Endothelial cell of umbilical vein (primary cell): ENCODE measurements at regions of chr12 and their contacts with region 1.

Region 1: GRCh38 chr12:6944381-6945186 is 762 bp downstream of the C12orf57 start:
- DNase-seq: peak; percentile 89
- H3K4me3 ChIP-seq: peak overlapping the region; percentile 20 to 51 (median 51)
- H3K27ac ChIP-seq: peak overlapping the region; percentile 57
- H3K4me1 ChIP-seq: peaks cover 15% of the 10 kb centered on the region
- H3K27me3 ChIP-seq: no peaks in the 10 kb centered on the region
- CTCF ChIP-seq: peak; percentile 72 to 89
- POLR2A ChIP-seq: no peak

Region 2: GRCh38 chr12:6873094-6874014 is 71.2 kb before region 1 on chr12 and contains the start of gene SPSB2:
- CTCF ChIA-PET with region 1: interaction called, 27 read pairs
- POLR2A ChIA-PET with region 1: interaction called, 10 read pairs
- dilution Hi-C with region 1: no loop called
- intact Hi-C with region 1: loop called (anchors 1 kb)
- DNase-seq: peak; percentile 96
- H3K4me3 ChIP-seq: peak within 1 kb of the TSS; percentile 59 to 92 (median 84)
- H3K27ac ChIP-seq: peak within 1 kb of the TSS; percentile 60
- H3K4me1 ChIP-seq: peaks cover 34% of the 10 kb centered on the region
- H3K27me3 ChIP-seq: no peaks in the 10 kb centered on the region
- CTCF ChIP-seq: no peak
- POLR2A ChIP-seq: peak; percentile 91
- total RNA-seq, gene SPSB2: 3.9 and 6.9 TPM in 2 replicates

Region 3: GRCh38 chr12:6959058-6959804 is 14.6 kb after region 1 on chr12:
- CTCF ChIA-PET with region 1: interaction called, 124 read pairs
- POLR2A ChIA-PET with region 1: interaction called, 6 read pairs
- dilution Hi-C with region 1: no loop called
- intact Hi-C with region 1: no loop called
- DNase-seq: no peak
- H3K4me3 ChIP-seq: no peak overlapping the region
- H3K27ac ChIP-seq: no peak overlapping the region
- H3K4me1 ChIP-seq: peaks cover 18% of the 10 kb centered on the region
- H3K27me3 ChIP-seq: no peaks in the 10 kb centered on the region
- CTCF ChIP-seq: no peak
- POLR2A ChIP-seq: no peak

Region 4: DNA sequence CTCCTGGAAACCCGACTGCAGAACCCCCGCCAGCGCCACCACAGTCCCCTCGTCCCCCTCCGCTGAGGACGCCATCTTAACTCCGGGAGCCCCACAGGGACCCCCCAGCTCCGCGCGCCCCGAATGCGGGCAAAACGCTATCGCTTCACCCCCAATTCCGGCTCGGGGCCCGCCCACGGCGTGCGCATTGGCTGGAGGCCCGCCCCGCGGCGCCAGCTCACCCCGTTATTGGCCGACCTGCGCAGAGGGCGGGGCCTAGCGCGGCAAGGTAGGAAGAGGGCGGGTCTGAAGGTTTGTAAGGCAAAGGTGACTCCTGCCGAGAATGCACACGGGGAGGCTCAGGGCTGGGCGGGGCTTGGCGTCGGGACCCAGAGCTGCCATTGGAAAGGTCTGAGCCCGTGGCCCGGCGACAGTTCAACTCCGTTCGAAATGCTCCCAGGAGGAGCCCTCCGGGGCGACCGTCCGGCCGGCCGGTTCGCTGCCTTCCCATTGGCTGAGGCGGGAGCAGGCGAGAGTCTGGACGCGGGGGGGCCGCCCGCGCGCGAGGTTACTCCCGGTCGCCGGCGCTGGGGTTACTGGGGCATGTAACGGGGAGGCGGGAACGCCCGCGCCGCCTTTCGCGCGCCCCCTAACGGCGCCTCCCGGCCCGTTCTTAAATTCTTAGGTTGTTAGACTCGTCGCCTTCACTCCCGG is 73.9 kb after region 1 on chr12 and contains the start of gene LPCAT3:
- CTCF ChIA-PET with region 1: interaction called, 5 read pairs
- POLR2A ChIA-PET with region 1: interaction called, 6 read pairs
- dilution Hi-C with region 1: no loop called
- intact Hi-C with region 1: loop called (anchors 2 kb)
- DNase-seq: peak; percentile 97
- H3K4me3 ChIP-seq: peak within 1 kb of the TSS; percentile 79 to 98 (median 97)
- H3K27ac ChIP-seq: peak within 1 kb of the TSS; percentile 64
- H3K4me1 ChIP-seq: peaks cover 10% of the 10 kb centered on the region
- H3K27me3 ChIP-seq: no peaks in the 10 kb centered on the region
- CTCF ChIP-seq: peak; percentile 88 to 94
- POLR2A ChIP-seq: peak; percentile 49
- total RNA-seq, gene LPCAT3: 29.3 and 29.5 TPM in 2 replicates

Region 5: DNA sequence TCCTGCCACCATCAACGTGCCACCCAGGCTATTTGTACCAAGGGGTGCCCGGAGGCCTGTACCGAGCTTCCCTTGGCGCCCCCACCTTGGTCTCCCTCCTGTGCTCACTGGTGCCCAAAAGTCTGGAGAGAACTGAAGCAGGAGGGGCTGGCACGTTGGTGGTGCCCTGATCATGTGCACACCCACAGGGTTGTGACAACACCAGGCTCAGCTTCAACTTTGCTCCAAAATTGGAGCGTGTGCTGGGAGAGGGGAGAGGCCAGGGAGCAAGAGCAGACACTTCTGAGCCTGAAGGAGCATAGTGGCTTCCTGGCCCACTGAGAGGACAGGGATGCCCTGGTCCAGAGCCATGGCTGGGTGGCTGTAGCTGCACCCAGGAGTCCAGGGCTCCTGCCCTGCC is 86.7 kb after region 1 on chr12:
- CTCF ChIA-PET with region 1: no interaction called
- POLR2A ChIA-PET with region 1: no interaction called
- dilution Hi-C with region 1: no loop called
- intact Hi-C with region 1: no loop called
- DNase-seq: no peak
- H3K4me3 ChIP-seq: no peak overlapping the region
- H3K27ac ChIP-seq: no peak overlapping the region
- H3K4me1 ChIP-seq: no peaks in the 10 kb centered on the region
- H3K27me3 ChIP-seq: peaks cover 5 to 8% of the 10 kb centered on the region in 2 experiments
- CTCF ChIP-seq: no peak
- POLR2A ChIP-seq: no peak

Region 6: DNA sequence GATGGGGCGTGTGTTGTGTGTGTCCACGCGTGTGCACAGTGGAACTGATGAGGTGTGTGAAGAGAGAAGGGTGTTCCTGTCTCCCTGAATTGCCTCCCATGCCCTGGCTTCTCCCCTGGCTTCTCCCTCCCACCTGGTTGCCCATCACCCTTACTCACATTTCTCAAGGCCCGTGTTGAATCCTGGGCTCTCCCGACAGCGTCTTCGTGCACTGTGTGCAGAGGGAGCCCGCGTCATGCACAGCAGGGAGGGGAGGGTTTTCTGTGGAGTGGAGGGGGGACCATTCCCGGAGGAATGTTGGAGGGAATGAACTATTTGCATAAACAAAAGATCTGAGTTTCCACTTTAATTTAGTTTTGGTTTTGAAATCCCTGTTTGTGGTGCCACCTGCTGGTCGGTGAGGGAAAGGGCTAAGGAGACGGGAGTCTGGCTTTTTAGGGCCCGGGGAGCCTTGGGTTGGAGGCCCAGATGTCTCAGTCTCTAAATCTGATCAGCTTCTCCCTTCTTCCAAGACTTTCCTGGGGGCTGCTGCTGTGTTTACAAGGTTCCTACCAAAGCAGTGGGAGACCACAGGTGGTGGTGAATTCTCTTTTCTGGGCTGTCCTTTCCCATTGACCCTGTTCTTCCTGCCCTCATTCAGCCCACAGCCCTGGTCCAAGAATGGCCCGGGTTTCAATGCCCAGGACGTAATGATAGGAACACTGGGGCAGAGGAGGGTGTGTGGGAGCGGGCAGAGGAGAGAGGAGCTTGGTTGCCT is 147.8 kb after region 1 on chr12 and contains the start of gene C1R:
- CTCF ChIA-PET with region 1: interaction called, 19 read pairs
- POLR2A ChIA-PET with region 1: no interaction called
- dilution Hi-C with region 1: no loop called
- intact Hi-C with region 1: loop called (anchors 1 kb)
- DNase-seq: peak; percentile 67
- H3K4me3 ChIP-seq: peak within 1 kb of the TSS; percentile 51 to 70 (median 64)
- H3K27ac ChIP-seq: no peak within 1 kb of the TSS
- H3K4me1 ChIP-seq: peaks cover 6% of the 10 kb centered on the region
- H3K27me3 ChIP-seq: peaks cover 0 to 16% of the 10 kb centered on the region in 2 experiments
- CTCF ChIP-seq: peak; percentile 85
- POLR2A ChIP-seq: no peak
- total RNA-seq, gene C1R: 3.1 and 3.6 TPM in 2 replicates

Region 7: DNA sequence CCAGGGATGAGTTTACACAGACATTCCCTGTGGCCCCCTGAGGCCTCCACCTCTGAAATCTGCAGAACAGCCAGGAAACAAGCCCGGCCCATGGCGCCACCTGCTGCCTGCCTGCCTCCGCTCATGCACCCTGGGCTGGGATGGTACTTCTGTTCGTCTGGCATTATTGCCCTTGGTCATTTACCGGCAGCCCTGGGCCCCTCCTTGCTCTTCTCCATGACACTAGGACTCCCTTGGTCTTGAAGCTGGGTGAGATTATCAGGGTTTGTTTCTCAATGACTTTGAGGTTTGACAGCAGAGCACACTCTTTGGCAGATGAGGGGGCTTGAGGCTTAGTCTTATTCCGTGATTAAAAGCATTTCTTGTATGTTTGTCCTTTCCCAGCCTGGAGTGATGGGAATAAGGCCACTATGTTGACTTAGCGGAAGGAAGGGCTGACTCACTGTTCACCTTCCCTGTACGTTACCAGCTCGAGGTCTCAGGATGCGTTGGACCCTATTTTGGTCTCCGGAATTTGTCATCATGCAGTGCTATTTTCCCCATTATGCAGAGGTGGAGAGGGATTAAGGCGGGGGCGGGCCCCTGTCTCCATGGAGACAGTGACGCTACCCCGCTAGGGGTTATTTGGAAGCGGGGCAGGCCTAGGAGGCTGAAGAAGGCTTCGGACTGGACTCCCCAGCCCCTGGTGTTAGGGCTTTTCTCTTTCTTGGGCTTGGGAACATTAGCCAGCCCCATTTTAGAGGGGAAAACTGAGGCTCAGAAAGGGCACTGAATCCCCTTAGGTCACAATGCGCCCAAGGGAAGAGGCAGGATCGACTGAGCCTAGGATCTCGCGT is 244.2 kb after region 1 on chr12:
- CTCF ChIA-PET with region 1: interaction called, 3 read pairs
- POLR2A ChIA-PET with region 1: no interaction called
- dilution Hi-C with region 1: no loop called
- intact Hi-C with region 1: loop called (anchors 1 kb)
- DNase-seq: peak; percentile 95
- H3K4me3 ChIP-seq: peak overlapping the region in 2 of 3 experiments; percentile 64 to 69
- H3K27ac ChIP-seq: peak overlapping the region; percentile 98
- H3K4me1 ChIP-seq: peaks cover 22% of the 10 kb centered on the region
- H3K27me3 ChIP-seq: no peaks in the 10 kb centered on the region
- CTCF ChIP-seq: peak; percentile 87 to 88
- POLR2A ChIP-seq: no peak